Ovary (tissue), 10 donors: ENCODE measurements at regions of chr4 and their contacts with region 1.

Region 1: DNA sequence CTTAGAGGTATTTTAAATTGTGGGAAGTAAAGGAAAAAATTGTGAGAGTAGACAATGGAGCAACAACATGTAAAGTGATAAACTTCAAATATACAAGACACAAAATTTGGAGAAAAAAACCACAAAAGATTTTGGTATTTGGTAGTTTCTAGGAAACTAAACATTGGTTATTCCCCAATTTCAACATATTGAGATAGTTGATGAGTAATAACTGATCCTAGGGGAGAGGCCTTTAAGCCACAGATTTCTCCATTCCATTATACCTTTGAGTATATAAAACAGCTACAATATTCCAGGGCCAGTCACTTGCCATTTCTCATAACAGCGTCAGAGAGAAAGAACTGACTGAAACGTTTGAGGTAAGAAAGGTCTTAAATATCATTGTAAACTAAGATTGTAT is at the start of gene FDCSP:
- DNase-seq: no peak
- H3K4me3 ChIP-seq: no peak within 1 kb of the TSS
- H3K27ac ChIP-seq: no peak within 1 kb of the TSS
- H3K4me1 ChIP-seq: no peaks in the 10 kb centered on the region
- H3K27me3 ChIP-seq: no peaks in the 10 kb centered on the region
- CTCF ChIP-seq: no peak
- EP300 ChIP-seq: no peak
- POLR2A ChIP-seq: no peak
- total RNA-seq, gene FDCSP: not detected

Region 2: DNA sequence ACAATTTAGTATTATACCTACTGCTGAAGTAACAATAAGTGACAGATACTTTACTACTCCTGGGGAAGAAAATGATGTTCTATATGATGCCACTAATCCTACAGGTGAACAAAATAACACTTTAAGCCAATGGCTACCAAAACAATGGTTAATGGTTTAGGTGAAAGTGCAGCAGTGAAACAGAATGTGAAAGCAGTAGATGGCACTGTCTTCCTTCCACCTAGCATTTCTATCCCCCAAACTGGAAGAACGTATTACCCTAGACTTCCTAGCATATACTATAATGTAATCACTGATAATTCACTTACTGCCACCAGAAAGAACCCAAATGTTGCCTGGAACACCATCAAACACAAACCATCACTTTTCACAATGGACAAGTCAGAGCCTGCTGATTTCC is 90.1 kb after region 1 on chr4:
- intact Hi-C with region 1: no loop called
- DNase-seq: no peak
- H3K4me3 ChIP-seq: no peak overlapping the region
- H3K27ac ChIP-seq: no peak overlapping the region
- H3K4me1 ChIP-seq: no peaks in the 10 kb centered on the region
- H3K27me3 ChIP-seq: no peaks in the 10 kb centered on the region
- CTCF ChIP-seq: no peak
- EP300 ChIP-seq: no peak
- POLR2A ChIP-seq: no peak

Region 3: DNA sequence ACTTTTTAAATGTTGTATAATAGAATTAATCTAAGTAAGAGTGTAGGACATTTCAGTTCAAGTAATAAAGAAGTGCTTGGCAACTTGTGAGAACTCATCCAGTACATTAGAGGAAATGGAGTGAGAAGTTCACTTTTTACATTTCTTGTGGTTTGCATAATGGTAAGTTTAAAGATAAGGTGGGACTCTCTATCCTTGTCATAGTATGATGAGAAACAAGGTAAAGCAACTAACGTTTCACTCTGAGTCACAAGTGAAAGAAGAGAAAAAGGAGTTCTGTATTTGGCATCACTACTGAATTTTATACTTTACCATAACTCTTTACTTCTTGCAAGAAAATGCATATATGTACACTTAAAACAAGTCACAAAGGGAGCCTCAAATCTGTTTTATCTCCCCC is 1332.4 kb after region 1 on chr4:
- intact Hi-C with region 1: loop called in 1 of 4 experiments (anchors 5 kb)
- DNase-seq: no peak
- H3K4me3 ChIP-seq: no peak overlapping the region
- H3K27ac ChIP-seq: no peak overlapping the region
- H3K4me1 ChIP-seq: no peaks in the 10 kb centered on the region
- H3K27me3 ChIP-seq: no peaks in the 10 kb centered on the region
- CTCF ChIP-seq: no peak
- EP300 ChIP-seq: no peak
- POLR2A ChIP-seq: no peak